Panc1 (cell line): ENCODE measurements at regions of chr7 and their contacts with region 1.

Region 1: DNA sequence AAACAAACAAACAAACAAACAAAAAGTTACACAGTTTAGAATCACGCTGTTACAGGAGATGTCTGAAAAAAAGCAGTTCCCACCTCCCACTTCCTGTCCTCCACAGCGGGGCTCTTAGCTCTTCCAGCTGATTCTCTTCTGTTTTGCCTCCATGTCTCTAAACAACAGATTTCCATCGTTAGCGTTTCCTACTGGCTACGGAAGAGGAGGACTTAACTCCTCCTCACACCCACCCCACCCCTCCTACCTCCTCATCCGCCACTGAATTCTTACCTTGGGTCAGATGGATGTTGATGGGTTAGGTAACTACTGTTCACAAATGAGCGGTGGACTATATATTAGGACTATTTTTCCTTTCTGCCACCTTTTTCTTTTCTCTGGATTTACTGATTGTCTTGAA is 36.8 kb upstream of the NUB1 start:
- DNase-seq: no peak
- ATAC-seq: no peak
- H3K4me3 ChIP-seq: peak overlapping the region; percentile 23 to 47
- H3K27ac ChIP-seq: no peak overlapping the region
- H3K4me1 ChIP-seq: no peaks in the 10 kb centered on the region
- H3K27me3 ChIP-seq: peaks cover 3% of the 10 kb centered on the region; the same call in 1 of the 2 replicates
- CTCF ChIP-seq: no peak

Region 2: DNA sequence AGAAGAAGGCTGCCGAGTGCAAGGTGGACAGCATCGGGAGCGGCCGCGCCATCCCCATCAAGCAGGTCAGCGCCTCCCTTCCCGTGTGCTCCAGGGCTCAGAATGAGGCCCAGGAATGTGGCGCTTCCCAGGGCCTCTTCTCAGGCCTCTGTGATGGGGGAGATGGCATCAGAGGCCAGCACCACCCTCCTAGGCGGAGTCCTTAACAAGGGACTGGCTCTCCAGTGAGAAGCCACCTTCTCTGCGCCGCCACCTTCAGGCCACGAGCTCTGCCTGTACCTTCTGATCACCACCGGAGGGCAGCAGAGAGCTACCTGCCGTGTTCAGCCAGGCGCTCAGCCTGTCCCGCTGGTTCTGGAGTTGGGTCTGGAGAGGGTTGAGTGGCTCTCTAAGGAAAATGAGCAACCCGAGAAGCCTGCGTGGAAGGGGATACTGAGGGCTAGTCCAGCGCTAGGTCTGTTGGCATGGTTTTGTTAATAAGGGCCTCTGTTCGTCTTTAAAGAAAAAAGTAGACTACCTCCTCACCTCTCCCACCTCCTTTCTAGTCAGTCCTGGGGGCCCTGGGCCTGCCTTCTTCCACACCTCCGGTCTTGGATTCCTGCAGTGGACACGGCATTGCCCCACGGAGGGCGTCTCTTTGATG is 180.9 kb before region 1 on chr7:
- CTCF ChIA-PET with region 1: no interaction called
- POLR2A ChIA-PET with region 1: no interaction called
- in situ Hi-C with region 1: no loop called
- intact Hi-C with region 1: loop called (anchors 5 kb)
- DNase-seq: peak; percentile 78
- ATAC-seq: peak; percentile 94
- H3K4me3 ChIP-seq: no peak overlapping the region
- H3K27ac ChIP-seq: no peak overlapping the region
- H3K4me1 ChIP-seq: no peaks in the 10 kb centered on the region
- H3K27me3 ChIP-seq: no peaks in the 10 kb centered on the region
- CTCF ChIP-seq: peak; percentile 99

Region 3: DNA sequence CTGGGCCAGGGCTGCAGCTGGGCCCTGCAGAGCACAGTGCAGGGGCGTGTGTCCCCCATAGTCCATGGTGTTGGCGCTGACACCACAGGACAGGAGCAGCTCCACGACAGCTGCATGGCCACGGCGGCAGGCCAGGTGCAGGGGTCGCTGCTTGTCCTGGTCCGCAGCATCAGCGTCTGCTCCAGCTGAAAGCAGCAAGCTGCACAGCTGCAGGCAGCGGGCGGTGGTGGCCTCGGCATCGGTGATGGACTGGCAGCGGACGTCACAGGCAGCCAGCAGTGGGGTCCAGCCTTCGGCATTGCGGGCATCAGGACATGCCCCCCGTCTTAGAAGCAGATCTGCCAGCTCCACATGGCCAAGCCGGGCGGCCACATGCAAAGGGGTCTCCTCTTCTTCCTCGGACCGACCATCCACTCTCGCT is 123.8 kb before region 1 on chr7:
- CTCF ChIA-PET with region 1: interaction called, 10 read pairs
- POLR2A ChIA-PET with region 1: no interaction called
- in situ Hi-C with region 1: no loop called
- intact Hi-C with region 1: no loop called
- DNase-seq: no peak
- ATAC-seq: no peak
- H3K4me3 ChIP-seq: no peak overlapping the region
- H3K27ac ChIP-seq: no peak overlapping the region
- H3K4me1 ChIP-seq: no peaks in the 10 kb centered on the region
- H3K27me3 ChIP-seq: peaks cover 4% of the 10 kb centered on the region; the same call in 1 of the 2 replicates
- CTCF ChIP-seq: no peak

Region 4: GRCh38 chr7:151251328-151251972 is 53.4 kb before region 1 on chr7:
- CTCF ChIA-PET with region 1: no interaction called
- POLR2A ChIA-PET with region 1: no interaction called
- in situ Hi-C with region 1: no loop called
- intact Hi-C with region 1: loop called (anchors 5 kb)
- DNase-seq: no peak
- ATAC-seq: peak; percentile 31
- H3K4me3 ChIP-seq: peak overlapping the region; percentile 56 to 67
- H3K27ac ChIP-seq: 0 out of 2 replicates have a peak overlapping the region, but pooled peaks have one; percentile 40
- H3K4me1 ChIP-seq: peaks cover 39% of the 10 kb centered on the region
- H3K27me3 ChIP-seq: no peaks in the 10 kb centered on the region
- CTCF ChIP-seq: no peak